Activated CD4-positive, alpha-beta memory T cell treated with anti-CD3 and anti-CD28 coated beads for 36 hours (primary cell): ENCODE measurements at regions of chr1 and their contacts with region 1.

Region 1: DNA sequence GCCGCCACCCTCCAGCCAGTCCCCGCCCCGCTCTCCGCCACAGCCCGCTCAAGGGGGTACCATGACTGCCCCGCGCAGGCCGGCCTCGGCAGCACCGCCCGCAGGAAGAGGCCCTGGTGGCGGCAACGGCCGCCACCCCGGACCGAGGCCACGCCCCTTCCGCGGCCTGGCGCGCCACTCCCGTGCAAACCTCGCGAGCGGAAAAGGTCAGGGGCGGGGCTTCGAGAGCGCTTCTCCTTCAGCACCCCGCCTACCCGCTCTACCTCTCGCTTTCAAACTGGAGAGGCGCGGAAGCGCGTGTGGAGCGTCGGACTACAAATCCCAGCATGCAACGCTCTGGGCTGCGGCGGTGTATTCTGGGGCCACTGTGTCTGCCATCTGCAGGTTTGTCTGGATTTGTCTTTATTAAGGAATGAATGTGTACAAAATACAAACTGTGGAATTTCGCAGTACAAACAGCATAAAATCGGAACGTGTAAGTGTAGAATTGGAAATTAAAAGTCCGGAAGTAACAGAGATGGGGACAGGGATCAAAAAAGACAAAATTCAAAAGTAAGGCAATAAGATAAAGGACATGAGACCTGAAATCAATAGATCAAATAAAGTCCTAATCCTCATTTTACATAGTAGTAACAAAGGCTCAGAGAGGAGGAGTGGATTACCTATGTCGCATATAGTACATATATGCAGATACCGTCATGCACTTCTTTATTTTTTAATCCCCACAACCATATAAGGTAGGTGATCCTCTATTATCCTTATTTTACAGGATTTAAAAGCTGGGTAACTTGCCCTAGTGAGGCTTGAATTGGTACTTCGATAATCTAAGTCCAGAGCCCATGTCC is 464 bp upstream of the ADSS2 start:
- DNase-seq: peak; percentile 99
- H3K4me3 Mint-ChIP-seq: peak overlapping the region; percentile 96
- H3K27ac Mint-ChIP-seq: peak overlapping the region; percentile 97
- H3K4me1 Mint-ChIP-seq: peaks cover 45% of the 10 kb centered on the region
- H3K27me3 Mint-ChIP-seq: no peaks in the 10 kb centered on the region

Region 2: DNA sequence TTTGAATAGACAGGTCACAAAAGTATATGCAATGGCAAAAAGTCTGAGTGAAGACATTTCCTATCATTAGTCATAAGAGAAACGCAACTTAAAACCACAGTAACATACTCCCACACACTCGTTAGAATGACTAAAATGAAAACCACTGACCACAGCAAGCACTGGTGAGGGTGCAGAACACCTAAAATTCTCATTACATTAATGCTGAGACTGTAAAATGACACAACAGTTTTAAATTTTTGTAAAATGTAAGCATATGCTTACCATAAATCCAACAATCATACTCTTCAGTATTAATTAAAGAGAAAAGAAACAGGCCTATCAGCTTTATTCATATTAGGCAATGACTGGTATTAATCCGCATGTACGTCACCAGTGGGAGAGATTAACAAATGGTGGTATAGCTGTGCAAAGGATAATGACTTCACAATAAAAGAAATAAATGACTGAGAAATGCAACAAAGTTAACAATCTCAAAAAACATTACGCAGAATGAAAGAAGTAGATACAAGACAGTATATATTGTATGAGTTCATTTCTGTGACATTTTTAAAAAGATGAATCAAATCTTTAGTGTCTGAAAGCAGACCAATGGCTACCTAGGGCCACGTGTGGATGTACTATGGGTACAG is 855.6 kb before region 1 on chr1:
- CTCF ChIA-PET with region 1: no interaction called
- POLR2A ChIA-PET with region 1: no interaction called
- intact Hi-C with region 1: loop called (anchors 5 kb)
- DNase-seq: peak; percentile 48
- H3K4me3 Mint-ChIP-seq: peak overlapping the region; percentile 17
- H3K27ac Mint-ChIP-seq: peak overlapping the region; percentile 71
- H3K4me1 Mint-ChIP-seq: peaks cover 29% of the 10 kb centered on the region
- H3K27me3 Mint-ChIP-seq: no peaks in the 10 kb centered on the region

Region 3: GRCh38 chr1:244329591-244330317 is 122.4 kb before region 1 on chr1:
- CTCF ChIA-PET with region 1: no interaction called
- POLR2A ChIA-PET with region 1: no interaction called
- intact Hi-C with region 1: no loop called
- DNase-seq: no peak
- H3K4me3 Mint-ChIP-seq: no peak overlapping the region
- H3K27ac Mint-ChIP-seq: no peak overlapping the region
- H3K4me1 Mint-ChIP-seq: peaks cover 12% of the 10 kb centered on the region
- H3K27me3 Mint-ChIP-seq: peaks cover 17% of the 10 kb centered on the region

Region 4: DNA sequence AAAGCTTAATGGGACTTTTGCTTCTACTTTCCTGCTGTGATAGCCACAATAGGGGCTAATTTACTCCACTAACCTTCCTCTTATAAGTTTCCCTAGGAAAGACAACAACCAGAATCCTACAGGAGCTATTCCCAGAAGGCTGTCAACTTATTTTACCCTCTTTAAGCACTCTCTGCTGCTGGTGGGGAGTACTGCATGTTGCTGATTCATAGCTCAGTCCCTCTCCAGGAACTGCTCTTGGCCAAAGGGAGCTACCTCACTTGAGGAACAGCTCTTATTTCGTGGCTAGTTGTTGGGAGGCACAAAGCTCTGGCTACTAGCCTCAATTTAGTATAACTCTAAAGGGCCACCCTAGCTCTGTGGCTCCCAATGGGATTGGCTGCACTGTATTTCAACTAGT is 37.6 kb before region 1 on chr1:
- CTCF ChIA-PET with region 1: no interaction called
- POLR2A ChIA-PET with region 1: no interaction called
- intact Hi-C with region 1: no loop called
- DNase-seq: no peak
- H3K4me3 Mint-ChIP-seq: no peak overlapping the region
- H3K27ac Mint-ChIP-seq: no peak overlapping the region
- H3K4me1 Mint-ChIP-seq: peaks cover 10% of the 10 kb centered on the region
- H3K27me3 Mint-ChIP-seq: no peaks in the 10 kb centered on the region

Region 5: GRCh38 chr1:244435562-244436205 is 16.5 kb before region 1 on chr1:
- CTCF ChIA-PET with region 1: interaction called, 4 read pairs
- POLR2A ChIA-PET with region 1: no interaction called
- intact Hi-C with region 1: loop called (anchors 1 kb)
- DNase-seq: peak; percentile 53
- H3K4me3 Mint-ChIP-seq: no peak overlapping the region
- H3K27ac Mint-ChIP-seq: peak overlapping the region; percentile 89
- H3K4me1 Mint-ChIP-seq: peaks cover 45% of the 10 kb centered on the region
- H3K27me3 Mint-ChIP-seq: no peaks in the 10 kb centered on the region

Region 6: DNA sequence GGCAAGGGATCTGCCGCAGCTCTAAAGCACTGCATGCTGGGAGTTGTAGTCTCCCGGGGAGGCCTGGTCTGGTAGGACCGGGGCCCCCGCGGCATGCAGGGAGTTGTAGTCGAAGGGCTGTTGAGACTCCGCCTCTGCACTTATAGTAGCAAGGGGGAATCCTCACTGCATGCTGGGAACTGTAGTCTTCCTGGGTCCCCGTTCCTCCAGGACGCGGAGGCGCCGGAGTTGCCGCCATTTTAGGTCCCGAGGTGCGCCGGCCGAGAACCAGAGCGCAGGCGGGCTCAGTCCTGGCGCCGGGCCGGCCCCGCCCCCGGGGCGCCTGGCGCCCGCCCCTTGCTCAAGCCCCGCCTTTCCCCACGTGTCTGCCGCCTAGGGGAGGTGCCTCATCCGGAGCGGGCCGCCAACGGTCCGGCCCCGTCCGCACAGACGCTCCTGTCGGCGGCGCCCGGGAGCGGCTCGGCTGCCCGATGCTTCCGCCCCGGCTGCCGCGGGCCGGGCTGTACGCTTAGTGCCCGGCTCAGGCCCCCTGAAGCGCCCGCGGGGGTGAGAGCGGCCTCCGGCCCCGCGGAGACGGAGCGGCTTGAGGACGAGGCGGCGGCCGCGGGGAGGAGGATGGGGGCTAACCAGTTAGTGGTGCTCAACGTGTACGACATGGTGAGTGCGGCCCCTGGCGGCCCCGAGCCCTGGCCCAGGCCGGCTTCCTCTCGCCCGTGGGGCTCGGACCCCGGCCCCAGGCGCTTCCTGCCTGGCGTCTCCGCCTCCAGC is 200.7 kb after region 1 on chr1 and contains the start of gene DESI2:
- CTCF ChIA-PET with region 1: interaction called, 3 read pairs
- POLR2A ChIA-PET with region 1: interaction called, 6 read pairs
- intact Hi-C with region 1: loop called (anchors 1 kb)
- DNase-seq: peak; percentile 98
- H3K4me3 Mint-ChIP-seq: peak within 1 kb of the TSS; percentile 79
- H3K27ac Mint-ChIP-seq: peak within 1 kb of the TSS; percentile 79
- H3K4me1 Mint-ChIP-seq: peaks cover 22% of the 10 kb centered on the region
- H3K27me3 Mint-ChIP-seq: no peaks in the 10 kb centered on the region
- total RNA-seq, gene DESI2: 24.8 to 25.6 TPM

Region 7: DNA sequence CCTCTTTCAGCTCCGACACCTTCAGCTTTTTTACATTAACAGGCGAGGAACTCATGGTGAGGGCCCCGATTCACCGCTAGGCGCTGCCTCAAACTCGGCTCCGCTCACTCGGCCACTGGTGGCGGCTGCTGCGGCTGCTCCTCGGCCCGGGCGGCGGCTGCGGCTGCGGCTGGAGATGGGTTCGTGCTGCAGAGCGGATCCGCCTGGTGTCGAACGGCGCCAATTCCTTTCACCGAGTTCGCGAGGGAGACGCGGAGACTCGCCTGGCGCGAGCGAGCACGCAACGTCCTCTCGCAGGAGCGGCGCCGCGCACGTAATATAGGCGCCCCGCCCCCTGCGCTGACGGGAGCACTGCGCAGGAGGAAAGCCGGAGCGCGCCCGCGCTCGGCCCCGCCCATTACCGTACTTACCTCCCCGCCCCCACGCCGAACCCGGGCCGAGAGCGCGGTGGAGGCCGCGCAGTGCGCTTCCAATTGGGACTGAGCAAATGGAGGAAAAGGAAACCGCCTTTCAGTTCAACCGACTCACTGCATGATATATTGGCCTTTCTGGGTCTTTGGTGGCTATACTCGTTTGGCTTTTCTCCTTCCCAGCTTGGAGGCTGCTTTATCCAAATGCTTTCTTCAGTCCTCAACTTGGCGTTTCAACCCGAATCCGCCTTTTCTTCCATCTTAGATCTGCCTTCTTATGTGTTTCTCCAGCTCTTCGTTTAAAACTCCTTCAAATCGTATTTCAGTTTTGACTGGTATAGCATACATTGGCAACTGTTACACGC is 412.3 kb after region 1 on chr1 and contains the start of gene HNRNPU:
- CTCF ChIA-PET with region 1: no interaction called
- POLR2A ChIA-PET with region 1: no interaction called
- intact Hi-C with region 1: loop called (anchors 1 kb)
- DNase-seq: peak; percentile 97
- H3K4me3 Mint-ChIP-seq: peak within 1 kb of the TSS; percentile 99
- H3K27ac Mint-ChIP-seq: peak within 1 kb of the TSS; percentile 97
- H3K4me1 Mint-ChIP-seq: peaks cover 38% of the 10 kb centered on the region
- H3K27me3 Mint-ChIP-seq: no peaks in the 10 kb centered on the region
- total RNA-seq, gene HNRNPU: 410 to 421 TPM

Region 8: GRCh38 chr1:245060684-245061374 is 608.7 kb after region 1 on chr1:
- CTCF ChIA-PET with region 1: no interaction called
- POLR2A ChIA-PET with region 1: no interaction called
- intact Hi-C with region 1: no loop called
- DNase-seq: no peak
- H3K4me3 Mint-ChIP-seq: no peak overlapping the region
- H3K27ac Mint-ChIP-seq: no peak overlapping the region
- H3K4me1 Mint-ChIP-seq: no peaks in the 10 kb centered on the region
- H3K27me3 Mint-ChIP-seq: no peaks in the 10 kb centered on the region